K562 (cell line): ENCODE measurements at regions of chr11 and their contacts with region 1.

Region 1: GRCh38 chr11:118746988-118747585 is 43.9 kb downstream of the DDX6 start:
- DNase-seq: no peak
- ATAC-seq: peak; percentile 40
- H3K4me3 ChIP-seq: no peak overlapping the region
- H3K27ac ChIP-seq: no peak overlapping the region
- H3K4me1 ChIP-seq: peaks cover 0 to 10% of the 10 kb centered on the region in 2 experiments; a peak in 3 of 5 replicates
- H3K27me3 ChIP-seq: no peaks in the 10 kb centered on the region
- CTCF ChIP-seq: no peak
- EP300 ChIP-seq: no peak
- POLR2A ChIP-seq: peak; percentile 70
- RAD21 ChIP-seq: no peak

Region 2: GRCh38 chr11:118689851-118690552 is 57.1 kb before region 1 on chr11:
- CTCF ChIA-PET with region 1: no interaction called
- POLR2A ChIA-PET with region 1: interaction called, 6 read pairs
- in situ Hi-C with region 1: no loop called
- intact Hi-C with region 1: loop called (anchors 5 kb)
- DNase-seq: peak; percentile 91 to 96 (median 94)
- ATAC-seq: peak; percentile 99
- H3K4me3 ChIP-seq: no peak overlapping the region
- H3K27ac ChIP-seq: peak overlapping the region; percentile 11; the same call in 2 of the 3 replicates
- H3K4me1 ChIP-seq: peaks cover 0 to 36% of the 10 kb centered on the region in 2 experiments; a peak in 3 of 5 replicates
- H3K27me3 ChIP-seq: no peaks in the 10 kb centered on the region
- CTCF ChIP-seq: peak; percentile 98 to 99 (median 99)
- EP300 ChIP-seq: no peak
- POLR2A ChIP-seq: no peak
- RAD21 ChIP-seq: peak; percentile 89 to 96

Region 3: DNA sequence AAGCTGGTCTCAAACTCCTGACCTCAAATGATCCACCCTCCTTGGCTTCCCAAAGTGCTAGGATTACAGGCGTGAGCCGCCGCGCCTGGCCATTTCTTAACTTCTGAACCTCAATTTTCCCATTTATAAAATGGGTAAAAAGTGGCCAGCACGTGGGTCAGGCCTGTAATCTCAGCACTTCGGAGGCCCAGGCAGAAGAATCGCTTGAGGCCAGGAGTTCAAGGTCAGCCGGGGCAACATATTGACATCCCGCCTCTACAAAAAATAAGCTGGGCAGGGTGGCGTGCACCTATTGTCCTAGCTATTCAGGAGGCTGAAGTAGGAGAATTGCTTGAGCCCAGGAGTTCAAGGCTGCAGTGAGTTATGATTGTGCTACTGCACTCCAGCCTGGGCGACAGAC is 50.4 kb after region 1 on chr11:
- CTCF ChIA-PET with region 1: no interaction called
- POLR2A ChIA-PET with region 1: no interaction called
- in situ Hi-C with region 1: no loop called
- intact Hi-C with region 1: no loop called
- DNase-seq: no peak
- ATAC-seq: no peak
- H3K4me3 ChIP-seq: no peak overlapping the region
- H3K27ac ChIP-seq: no peak overlapping the region
- H3K4me1 ChIP-seq: peaks cover 0 to 1% of the 10 kb centered on the region in 2 experiments; a peak in 1 of 5 replicates
- H3K27me3 ChIP-seq: no peaks in the 10 kb centered on the region
- CTCF ChIP-seq: no peak
- EP300 ChIP-seq: no peak
- POLR2A ChIP-seq: no peak
- RAD21 ChIP-seq: no peak